ENCODE measurements at regions of chrX and their contacts with region 1.

Region 1: DNA sequence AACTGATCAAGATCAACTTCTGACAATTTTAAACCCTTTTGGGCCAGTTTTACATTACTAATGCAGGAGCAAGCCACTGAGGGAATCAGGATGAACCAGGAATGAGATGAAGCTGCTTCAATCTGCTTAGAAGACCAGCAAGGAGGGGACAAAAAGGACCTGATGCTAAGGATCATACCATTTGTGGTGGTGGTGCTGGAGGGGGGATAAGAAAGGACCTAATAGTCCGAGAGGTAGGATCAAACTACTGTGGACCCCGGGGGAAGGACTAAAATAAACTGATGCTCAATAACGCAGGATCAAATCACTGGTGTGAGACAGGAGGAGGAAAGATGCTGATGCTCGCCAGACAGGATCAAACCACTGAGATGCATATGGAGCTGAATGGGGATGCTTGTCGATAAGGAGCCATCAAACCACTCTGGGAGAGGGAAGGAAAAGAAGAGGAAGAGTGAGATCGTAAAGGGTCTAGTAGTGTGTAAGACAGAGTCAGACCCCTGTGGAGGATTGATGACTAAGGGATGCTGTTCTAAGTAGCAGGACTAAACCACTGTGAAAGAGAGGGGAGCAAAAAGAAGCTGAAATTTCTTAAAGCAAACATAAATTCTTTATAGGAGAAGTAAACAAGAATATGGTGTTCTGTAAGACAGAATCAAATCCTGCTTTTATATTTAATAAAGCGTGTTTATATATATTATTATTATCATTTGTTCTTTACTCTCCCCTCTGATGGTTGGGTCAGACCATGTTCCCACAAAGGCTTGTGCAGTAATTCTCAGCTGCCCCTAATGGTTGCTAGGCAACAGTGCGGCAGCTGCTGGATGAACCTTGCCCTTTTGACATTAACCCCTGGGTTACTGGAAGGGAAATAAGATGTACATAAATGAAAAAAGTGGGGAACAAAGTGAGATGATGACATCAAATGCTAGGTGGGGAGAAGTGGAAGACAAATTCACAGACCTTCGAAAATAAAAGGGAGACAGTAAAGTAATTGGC is 432.5 kb upstream of the FGF16 start:
- DNase-seq: no peak
- H3K4me3 ChIP-seq: no peak overlapping the region
- H3K27ac ChIP-seq: no peak overlapping the region
- H3K4me1 ChIP-seq: peaks cover 0 to 4% of the 10 kb centered on the region in 2 donors
- H3K27me3 ChIP-seq: no peaks in the 10 kb centered on the region
- CTCF ChIP-seq: no peak

Region 2: GRCh38 chrX:76802708-76803107 is 212.0 kb before region 1 on chrX:
- intact Hi-C with region 1: no loop called
- DNase-seq: no peak
- H3K4me3 ChIP-seq: no peak overlapping the region
- H3K27ac ChIP-seq: no peak overlapping the region
- H3K4me1 ChIP-seq: no peaks in the 10 kb centered on the region
- H3K27me3 ChIP-seq: no peaks in the 10 kb centered on the region
- CTCF ChIP-seq: no peak

Region 3: DNA sequence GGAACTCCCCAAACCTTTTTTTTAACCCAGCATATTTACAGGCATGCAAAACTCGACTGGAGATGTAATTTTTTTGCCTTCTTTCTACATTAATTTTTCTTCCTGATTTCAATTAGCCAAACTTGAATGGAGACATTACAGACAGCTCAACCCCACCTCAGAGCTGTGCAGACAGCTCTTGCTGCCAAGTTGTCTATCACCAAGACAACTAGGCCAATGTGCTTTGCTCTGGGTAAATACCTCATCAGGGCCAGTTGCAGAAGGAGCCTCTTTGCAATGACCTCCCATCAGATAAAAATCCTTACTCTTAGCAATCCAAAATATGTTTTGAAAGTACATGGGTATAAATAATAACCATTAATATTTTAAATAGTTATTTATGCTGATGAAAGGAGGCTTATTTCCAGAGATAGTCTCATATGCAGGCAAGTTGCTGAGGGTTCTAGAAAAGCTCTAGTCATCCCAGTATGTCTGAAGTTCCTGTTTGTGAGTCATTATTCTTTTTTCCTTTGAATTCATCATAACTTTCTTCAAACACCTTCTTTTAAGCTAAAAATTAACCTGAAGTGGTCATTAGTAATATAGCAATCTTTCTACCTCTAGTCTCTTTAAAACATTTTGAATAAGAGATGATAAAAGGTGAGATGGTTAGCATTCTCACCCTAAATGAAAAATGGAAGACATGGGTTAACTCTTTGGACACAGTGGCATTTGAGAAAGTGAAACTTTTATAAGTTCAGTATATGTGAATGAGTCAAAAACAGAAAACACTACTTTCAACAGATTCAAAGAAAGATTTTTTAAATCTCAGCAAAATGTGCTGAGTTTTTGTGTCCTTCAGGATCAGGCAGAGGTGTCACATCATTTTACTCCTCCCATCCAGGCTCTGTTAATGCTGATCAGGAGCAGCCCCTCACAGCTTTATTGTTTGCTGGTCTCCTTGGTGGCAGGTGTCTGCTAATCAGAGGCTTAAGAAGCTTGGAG is 43.0 kb before region 1 on chrX:
- intact Hi-C with region 1: loop called (anchors 5 kb)
- DNase-seq: no peak
- H3K4me3 ChIP-seq: no peak overlapping the region
- H3K27ac ChIP-seq: peak overlapping the region; percentile 28 to 49
- H3K4me1 ChIP-seq: peaks cover 0 to 7% of the 10 kb centered on the region in 2 donors
- H3K27me3 ChIP-seq: no peaks in the 10 kb centered on the region
- CTCF ChIP-seq: no peak

Measured in ascending aorta (tissue), 2 donors.